GM10248 (cell line): ENCODE measurements at regions of chr19 and their contacts with region 1.

Region 1: DNA sequence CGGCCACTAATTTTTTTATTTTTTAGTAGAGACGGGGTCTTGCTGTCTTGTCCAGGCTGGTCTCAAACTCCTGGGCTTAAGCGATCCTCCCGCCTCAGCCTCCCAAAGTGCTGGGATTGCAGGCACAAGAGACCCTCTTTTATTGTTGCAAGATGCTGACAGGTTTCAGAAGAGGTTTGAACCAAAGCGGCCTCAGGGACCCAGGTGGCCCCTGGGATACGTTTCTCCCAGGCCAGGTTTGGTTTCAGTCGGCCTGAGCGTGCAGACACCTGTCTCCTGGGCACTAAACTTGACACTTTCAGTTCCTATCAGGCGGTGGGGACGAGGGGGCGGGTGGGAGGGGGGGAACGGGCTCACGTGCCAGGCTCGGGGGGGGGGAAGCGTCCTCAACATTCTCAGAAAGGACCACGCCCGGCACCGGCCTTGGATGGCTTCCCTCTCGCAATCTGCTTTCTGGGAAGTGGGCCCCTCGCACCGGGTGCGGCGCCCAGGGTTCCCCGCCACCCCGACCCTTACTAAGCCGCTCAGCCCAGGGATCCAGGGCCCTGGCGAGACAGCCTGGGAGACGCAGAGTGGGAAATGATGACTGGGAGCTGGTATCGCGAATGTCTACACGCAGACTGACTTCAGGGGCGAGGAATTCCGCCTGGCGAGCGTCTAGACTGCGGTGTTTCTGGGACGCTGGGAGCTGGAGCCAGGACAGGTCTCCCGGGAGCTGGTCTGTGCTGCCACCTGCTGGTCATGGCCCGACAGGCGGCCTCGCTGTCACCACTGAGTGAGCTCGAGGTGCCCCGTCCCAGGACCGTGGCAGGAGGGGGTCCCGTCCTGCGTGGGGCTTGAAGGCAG is 91.6 kb downstream of the GNG7 start:
- DNase-seq: peak; percentile 72
- CTCF ChIP-seq: peak; percentile 99

Region 2: DNA sequence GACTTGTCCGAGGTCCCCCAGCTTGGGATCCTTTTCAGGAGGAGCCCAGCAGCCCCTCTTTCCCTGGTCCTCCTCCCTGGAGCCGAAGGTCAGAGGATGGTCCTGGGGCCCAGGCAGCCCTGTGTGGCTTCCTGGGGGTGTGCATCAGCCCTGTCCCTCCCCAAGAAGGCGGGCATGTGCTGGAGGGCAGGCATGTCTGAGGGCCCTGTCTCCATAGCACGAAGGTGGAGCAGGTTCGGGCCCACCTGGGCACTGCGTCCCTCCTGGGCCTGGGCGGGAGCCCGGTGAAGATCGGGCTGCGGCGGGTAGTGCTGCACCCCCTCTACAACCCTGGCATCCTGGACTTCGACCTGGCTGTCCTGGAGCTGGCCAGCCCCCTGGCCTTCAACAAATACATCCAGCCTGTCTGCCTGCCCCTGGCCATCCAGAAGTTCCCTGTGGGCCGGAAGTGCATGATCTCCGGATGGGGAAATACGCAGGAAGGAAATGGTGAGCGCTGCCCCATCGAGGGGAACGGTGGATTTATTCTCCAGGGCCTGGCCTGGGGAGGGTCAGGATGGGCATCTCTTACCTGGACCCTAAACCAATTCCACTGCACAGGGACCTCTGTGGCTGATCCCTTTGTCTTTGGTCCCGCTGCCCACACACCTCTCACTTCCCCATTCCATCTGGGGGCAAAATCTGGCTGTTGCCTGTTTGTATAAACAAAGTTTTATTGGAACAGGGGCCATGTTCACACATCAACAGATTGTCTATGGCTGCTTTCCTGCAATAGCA is 194.4 kb before region 1 on chr19:
- CTCF ChIA-PET with region 1: no interaction called
- POLR2A ChIA-PET with region 1: no interaction called
- DNase-seq: no peak
- CTCF ChIP-seq: no peak

Region 3: GRCh38 chr19:2455851-2456570 is 154.8 kb before region 1 on chr19:
- CTCF ChIA-PET with region 1: interaction called, 10 read pairs
- POLR2A ChIA-PET with region 1: no interaction called
- DNase-seq: peak; percentile 86
- CTCF ChIP-seq: no peak

Region 4: DNA sequence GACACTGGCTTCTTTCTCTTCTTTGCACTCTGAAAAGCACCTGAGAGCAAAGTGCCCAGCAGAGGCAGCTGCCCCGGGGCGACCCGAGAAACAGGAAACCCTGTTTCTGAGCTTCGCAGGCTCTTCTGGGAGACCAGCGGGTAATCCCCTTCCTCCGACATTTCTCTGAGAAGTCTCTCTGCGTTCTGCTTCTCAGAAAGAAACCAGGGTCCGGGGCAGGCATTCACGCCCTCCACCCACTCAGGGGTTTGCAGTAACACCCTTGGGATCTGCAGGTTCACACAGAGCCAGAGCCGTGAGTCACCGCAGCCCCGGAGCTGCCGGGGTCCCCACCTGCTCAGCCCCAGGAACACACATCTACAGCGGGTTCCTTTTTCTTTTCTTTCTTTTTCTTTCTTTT is 49.0 kb before region 1 on chr19:
- CTCF ChIA-PET with region 1: interaction called, 6 read pairs
- POLR2A ChIA-PET with region 1: interaction called, 11 read pairs
- DNase-seq: peak; percentile 87
- CTCF ChIP-seq: no peak

Region 5: GRCh38 chr19:2578901-2579677 is 31.8 kb before region 1 on chr19:
- CTCF ChIA-PET with region 1: interaction called, 15 read pairs
- POLR2A ChIA-PET with region 1: interaction called, 7 read pairs
- DNase-seq: peak; percentile 83
- CTCF ChIP-seq: peak; percentile 74

Region 6: DNA sequence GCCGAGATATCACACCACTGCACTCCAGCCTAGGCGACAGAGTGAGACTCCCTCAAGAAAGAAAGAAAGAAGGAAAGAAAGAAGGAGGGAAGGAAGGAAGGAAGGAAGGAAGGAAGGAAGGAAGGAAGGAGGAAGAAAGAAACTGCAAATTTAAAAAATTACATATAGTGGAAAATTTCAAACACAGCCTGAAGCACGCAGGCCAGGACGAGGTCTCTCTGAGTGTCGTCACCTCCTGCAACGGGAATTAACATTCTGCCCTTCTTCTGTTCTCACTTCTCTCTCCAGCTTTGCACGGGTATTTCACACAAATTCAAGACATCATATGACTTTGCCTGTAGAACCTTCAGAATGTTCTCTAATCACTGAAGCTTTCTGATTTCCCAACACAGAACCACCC is 16.5 kb before region 1 on chr19:
- CTCF ChIA-PET with region 1: interaction called, 36 read pairs
- POLR2A ChIA-PET with region 1: interaction called, 17 read pairs
- DNase-seq: peak; percentile 55
- CTCF ChIP-seq: no peak

Region 7: DNA sequence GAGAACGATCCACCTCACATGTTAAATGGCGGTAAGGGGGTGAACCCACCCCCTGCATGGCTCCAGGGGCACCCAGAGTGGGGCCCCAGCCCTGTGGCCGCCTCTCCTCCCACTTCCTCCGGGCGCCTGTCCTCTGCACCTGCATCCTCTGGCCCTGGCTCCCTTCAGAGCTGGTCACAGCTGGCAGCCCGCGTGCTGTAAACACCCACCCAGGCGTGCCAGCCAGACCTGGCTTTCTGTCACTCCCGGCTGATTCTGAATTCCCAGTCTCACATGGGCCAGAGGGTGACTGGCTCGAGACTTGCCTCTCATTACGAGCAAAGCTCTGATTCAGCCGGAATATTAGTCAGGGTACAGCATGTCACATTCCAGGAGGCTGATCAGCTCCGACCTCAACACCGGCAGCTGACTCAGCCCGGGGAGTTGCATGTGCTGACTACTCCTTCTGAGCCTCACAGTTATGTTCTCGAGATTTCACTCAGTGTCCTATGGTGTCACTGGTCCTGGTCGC is 16.5 kb after region 1 on chr19:
- CTCF ChIA-PET with region 1: interaction called, 104 read pairs
- POLR2A ChIA-PET with region 1: interaction called, 4 read pairs
- DNase-seq: peak; percentile 39
- CTCF ChIP-seq: no peak

Region 8: GRCh38 chr19:2636897-2637683 is 26.2 kb after region 1 on chr19:
- CTCF ChIA-PET with region 1: interaction called, 109 read pairs
- POLR2A ChIA-PET with region 1: interaction called, 3 read pairs
- DNase-seq: peak; percentile 91
- CTCF ChIP-seq: peak; percentile 87

Region 9: GRCh38 chr19:2668175-2668763 is 57.4 kb after region 1 on chr19:
- CTCF ChIA-PET with region 1: no interaction called
- POLR2A ChIA-PET with region 1: no interaction called
- DNase-seq: peak; percentile 55
- CTCF ChIP-seq: no peak